ENCODE measurements at regions of chr15 and their contacts with region 1.

Region 1: DNA sequence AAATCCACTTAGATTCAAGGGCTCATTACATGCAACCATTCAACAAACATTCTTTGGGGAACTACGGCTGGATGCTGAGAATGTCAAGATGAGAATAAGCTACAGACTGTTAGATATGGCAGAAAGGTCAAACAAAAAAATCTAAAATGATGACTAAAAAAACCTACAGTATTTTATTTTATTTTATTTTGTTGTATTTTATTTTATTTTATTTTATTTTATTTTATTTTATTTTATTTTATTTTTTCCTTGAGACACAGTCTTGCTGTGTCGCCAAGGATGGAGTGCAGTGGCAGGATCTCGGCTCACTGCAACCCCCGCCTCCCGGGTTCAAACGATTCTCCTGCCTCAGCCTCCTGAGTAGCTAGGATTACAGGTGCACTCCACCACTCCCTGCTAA is 46.2 kb downstream of the WDR72 start:
- DNase-seq: no peak
- ATAC-seq: no peak
- H3K4me3 ChIP-seq: no peak overlapping the region
- H3K4me3 Mint-ChIP-seq: no peak overlapping the region
- H3K27ac ChIP-seq: no peak overlapping the region
- H3K27ac Mint-ChIP-seq: no peak overlapping the region
- H3K4me1 ChIP-seq: no peaks in the 10 kb centered on the region
- H3K4me1 Mint-ChIP-seq: no peaks in the 10 kb centered on the region
- H3K27me3 ChIP-seq: no peaks in the 10 kb centered on the region
- H3K27me3 Mint-ChIP-seq: peaks cover 0 to 9% of the 10 kb centered on the region in 2 donors

Region 2: GRCh38 chr15:53611145-53611920 is 101.9 kb before region 1 on chr15:
- CTCF ChIA-PET with region 1: interaction called in 1 of 2 experiments, 17 read pairs
- POLR2A ChIA-PET with region 1: no interaction called
- DNase-seq: no peak
- ATAC-seq: no peak
- H3K4me3 ChIP-seq: no peak overlapping the region
- H3K4me3 Mint-ChIP-seq: no peak overlapping the region
- H3K27ac ChIP-seq: no peak overlapping the region
- H3K27ac Mint-ChIP-seq: no peak overlapping the region
- H3K4me1 ChIP-seq: no peaks in the 10 kb centered on the region
- H3K4me1 Mint-ChIP-seq: no peaks in the 10 kb centered on the region
- H3K27me3 ChIP-seq: no peaks in the 10 kb centered on the region
- H3K27me3 Mint-ChIP-seq: no peaks in the 10 kb centered on the region

Measured in T-cell (primary cell).